Activated CD8-positive, alpha-beta T cell treated with anti-CD3 and anti-CD28 coated beads for 36 hours (primary cell): ENCODE measurements at regions of chr11 and their contacts with region 1.

Region 1: GRCh38 chr11:2305140-2305840 is 3.5 kb downstream of the TSPAN32 start:
- DNase-seq: peak; percentile 94
- ATAC-seq: peak; percentile 43
- H3K4me3 Mint-ChIP-seq: peak overlapping the region; percentile 53
- H3K27ac Mint-ChIP-seq: peak overlapping the region; percentile 91
- H3K4me1 Mint-ChIP-seq: peaks cover 65% of the 10 kb centered on the region
- H3K27me3 Mint-ChIP-seq: no peaks in the 10 kb centered on the region
- CTCF ChIP-seq: peak; percentile 80

Region 2: GRCh38 chr11:2122222-2123085 is 182.8 kb before region 1 on chr11:
- CTCF ChIA-PET with region 1: no interaction called
- POLR2A ChIA-PET with region 1: no interaction called
- intact Hi-C with region 1: no loop called
- DNase-seq: no peak
- ATAC-seq: no peak
- H3K4me3 Mint-ChIP-seq: no peak overlapping the region
- H3K27ac Mint-ChIP-seq: no peak overlapping the region
- H3K4me1 Mint-ChIP-seq: no peaks in the 10 kb centered on the region
- H3K27me3 Mint-ChIP-seq: peaks cover 16% of the 10 kb centered on the region
- CTCF ChIP-seq: no peak

Region 3: GRCh38 chr11:2196970-2197770 is 108.1 kb before region 1 on chr11:
- CTCF ChIA-PET with region 1: interaction called, 52 read pairs
- POLR2A ChIA-PET with region 1: interaction called, 3 read pairs
- intact Hi-C with region 1: no loop called
- DNase-seq: peak; percentile 86
- ATAC-seq: peak; percentile 98
- H3K4me3 Mint-ChIP-seq: no peak overlapping the region
- H3K27ac Mint-ChIP-seq: no peak overlapping the region
- H3K4me1 Mint-ChIP-seq: peaks cover 3% of the 10 kb centered on the region
- H3K27me3 Mint-ChIP-seq: peaks cover 9% of the 10 kb centered on the region
- CTCF ChIP-seq: peak; percentile 81

Region 4: DNA sequence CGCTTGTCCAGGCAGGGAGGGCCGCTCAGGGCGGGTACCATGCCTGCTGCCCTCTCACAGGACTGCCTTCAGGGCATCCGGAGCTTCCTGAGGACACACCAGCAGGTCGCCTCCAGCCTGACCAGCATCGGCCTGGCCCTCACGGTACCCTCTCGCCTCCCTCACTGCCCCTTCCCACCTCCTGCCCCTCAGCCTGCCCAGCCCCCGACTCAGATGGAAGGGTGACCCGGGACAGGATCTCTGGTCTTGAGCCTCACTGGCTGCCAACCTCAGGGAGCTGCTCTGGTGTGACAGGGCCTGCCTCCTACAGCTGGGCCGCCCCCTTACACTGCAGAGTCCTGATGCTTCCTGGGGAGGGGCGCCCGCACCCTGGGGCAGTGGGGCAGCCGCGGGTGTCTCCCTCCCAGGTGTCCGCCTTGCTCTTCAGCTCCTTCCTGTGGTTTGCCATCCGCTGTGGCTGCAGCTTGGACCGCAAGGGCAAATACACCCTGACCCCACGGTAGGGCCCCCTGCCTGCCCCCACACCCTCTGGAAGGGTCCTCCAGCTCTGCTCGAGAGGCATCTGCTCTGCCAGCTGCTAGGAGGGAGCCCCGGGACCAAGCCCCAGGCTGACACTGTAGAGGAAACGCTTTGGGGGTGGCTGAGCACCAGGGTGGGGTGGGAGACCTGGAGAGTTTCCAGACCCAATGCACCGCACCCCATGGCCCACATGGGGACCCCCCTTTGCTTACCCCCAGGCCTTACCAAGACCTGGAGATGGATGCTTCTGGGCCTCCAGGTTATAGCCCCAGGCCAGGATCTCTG is 11.1 kb after region 1 on chr11:
- CTCF ChIA-PET with region 1: interaction called, 16 read pairs
- POLR2A ChIA-PET with region 1: no interaction called
- intact Hi-C with region 1: no loop called
- DNase-seq: no peak
- ATAC-seq: no peak
- H3K4me3 Mint-ChIP-seq: no peak overlapping the region
- H3K27ac Mint-ChIP-seq: no peak overlapping the region
- H3K4me1 Mint-ChIP-seq: peaks cover 15% of the 10 kb centered on the region
- H3K27me3 Mint-ChIP-seq: no peaks in the 10 kb centered on the region
- CTCF ChIP-seq: no peak

Region 5: GRCh38 chr11:2377511-2378443 is 72.5 kb after region 1 on chr11:
- CTCF ChIA-PET with region 1: interaction called, 26 read pairs
- POLR2A ChIA-PET with region 1: interaction called, 7 read pairs
- intact Hi-C with region 1: no loop called
- DNase-seq: peak; percentile 73
- ATAC-seq: peak; percentile 46
- H3K4me3 Mint-ChIP-seq: peak overlapping the region; percentile 88
- H3K27ac Mint-ChIP-seq: peak overlapping the region; percentile 84
- H3K4me1 Mint-ChIP-seq: peaks cover 30% of the 10 kb centered on the region
- H3K27me3 Mint-ChIP-seq: no peaks in the 10 kb centered on the region
- CTCF ChIP-seq: no peak

Region 6: DNA sequence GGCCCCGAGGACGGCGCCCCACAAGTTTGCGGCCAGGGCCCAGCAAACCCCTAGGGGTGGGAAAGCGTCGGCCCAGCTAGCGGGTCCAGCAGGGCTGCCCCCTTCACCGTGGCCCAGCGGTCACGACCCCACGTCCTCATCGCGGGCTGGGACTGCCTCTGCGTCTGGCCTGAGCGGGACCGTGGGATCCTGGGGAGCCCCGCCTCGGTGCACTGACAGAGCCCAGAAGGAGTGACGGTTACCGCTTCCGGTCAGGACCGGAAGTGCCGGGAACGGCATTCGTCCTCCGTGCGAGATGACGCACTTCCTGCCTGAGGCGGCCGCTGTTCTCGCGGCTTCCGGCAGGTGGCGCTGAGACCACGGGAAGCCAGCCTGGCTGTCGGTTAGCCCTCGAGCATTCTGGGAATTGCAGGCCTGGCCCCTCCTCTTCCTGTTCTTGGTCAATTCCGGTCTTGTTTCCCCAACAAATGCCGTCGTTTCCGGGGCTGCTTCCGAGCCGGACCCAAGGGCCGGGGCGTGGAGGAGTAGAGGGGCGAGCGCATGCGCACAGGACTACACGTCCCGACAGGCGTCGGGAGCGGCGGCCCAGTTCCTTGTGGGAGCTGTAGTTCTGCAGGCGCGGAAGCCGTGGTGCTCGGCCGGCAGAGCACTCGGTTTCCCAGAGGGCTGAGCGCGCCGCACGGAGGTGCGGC is 94.9 kb after region 1 on chr11 and contains the start of gene TSSC4:
- CTCF ChIA-PET with region 1: interaction called, 62 read pairs
- POLR2A ChIA-PET with region 1: interaction called, 5 read pairs
- intact Hi-C with region 1: loop called (anchors 5 kb)
- DNase-seq: peak; percentile 99
- ATAC-seq: peak; percentile 92
- H3K4me3 Mint-ChIP-seq: peak within 1 kb of the TSS; percentile 84
- H3K27ac Mint-ChIP-seq: peak within 1 kb of the TSS; percentile 85
- H3K4me1 Mint-ChIP-seq: peaks cover 12% of the 10 kb centered on the region
- H3K27me3 Mint-ChIP-seq: no peaks in the 10 kb centered on the region
- CTCF ChIP-seq: peak; percentile 90
- total RNA-seq, gene TSSC4: 36.2 to 38.9 TPM

Region 7: GRCh38 chr11:2420502-2421225 is 115.4 kb after region 1 on chr11:
- CTCF ChIA-PET with region 1: interaction called, 381 read pairs
- POLR2A ChIA-PET with region 1: interaction called, 8 read pairs
- intact Hi-C with region 1: loop called (anchors 1 kb)
- DNase-seq: peak; percentile 77
- ATAC-seq: peak; percentile 98
- H3K4me3 Mint-ChIP-seq: no peak overlapping the region
- H3K27ac Mint-ChIP-seq: no peak overlapping the region
- H3K4me1 Mint-ChIP-seq: peaks cover 2% of the 10 kb centered on the region
- H3K27me3 Mint-ChIP-seq: no peaks in the 10 kb centered on the region
- CTCF ChIP-seq: peak; percentile 95